Activated CD4-positive, alpha-beta T cell treated with anti-CD3 and anti-CD28 coated beads for 36 hours (primary cell): ENCODE measurements at regions of chr7 and their contacts with region 1.

Region 1: DNA sequence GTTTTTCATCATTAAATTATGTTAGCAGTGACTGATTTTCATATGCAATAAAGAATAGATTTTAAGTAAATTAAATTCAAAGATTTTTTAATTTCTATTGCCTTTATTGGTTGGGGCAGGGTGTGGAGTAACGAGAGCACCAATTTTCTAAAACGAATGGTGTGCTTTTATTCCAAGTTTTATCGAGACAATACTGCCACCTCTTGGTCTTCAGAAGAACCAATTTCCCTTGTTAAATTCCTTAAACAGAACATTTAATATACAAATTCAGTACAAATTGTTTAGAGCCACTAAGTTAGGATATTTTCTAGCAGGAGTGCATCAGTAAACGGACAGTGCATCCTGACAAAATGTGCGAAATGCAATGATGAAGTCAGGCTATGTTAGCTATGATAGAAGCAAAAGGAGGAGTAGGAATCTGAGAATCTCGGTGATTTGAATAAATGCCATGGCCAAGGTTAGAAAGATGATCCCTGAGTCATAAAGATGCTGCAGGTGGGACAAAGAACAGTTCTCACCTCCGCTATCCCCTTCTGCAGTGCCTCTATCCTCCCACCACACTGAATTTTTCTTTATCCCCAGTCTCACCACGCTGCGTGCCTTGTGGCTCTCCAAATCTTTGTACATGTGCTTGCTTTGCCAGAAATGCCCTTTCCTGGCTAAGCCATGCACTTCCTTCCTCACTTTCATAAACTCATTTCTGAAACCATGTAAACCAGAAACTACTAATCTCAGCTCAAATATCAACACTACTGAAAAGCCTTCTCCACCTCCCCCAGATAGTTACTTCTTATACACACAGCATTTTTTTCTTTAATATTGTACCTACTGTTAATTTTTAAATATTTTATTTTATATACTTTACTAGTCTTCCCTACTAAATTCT is 31.9 kb upstream of the AGBL3 start:
- DNase-seq: no peak
- ATAC-seq: no peak
- H3K4me3 Mint-ChIP-seq: no peak overlapping the region
- H3K27ac Mint-ChIP-seq: no peak overlapping the region
- H3K4me1 Mint-ChIP-seq: peaks cover 2% of the 10 kb centered on the region
- H3K27me3 Mint-ChIP-seq: no peaks in the 10 kb centered on the region

Region 2: GRCh38 chr7:134514663-134515062 is 439.8 kb before region 1 on chr7:
- CTCF ChIA-PET with region 1: no interaction called
- POLR2A ChIA-PET with region 1: no interaction called
- intact Hi-C with region 1: loop called in 1 of 2 experiments (anchors 5 kb)
- DNase-seq: peak; percentile 15
- ATAC-seq: peak; percentile 77
- H3K4me3 Mint-ChIP-seq: no peak overlapping the region
- H3K27ac Mint-ChIP-seq: no peak overlapping the region
- H3K4me1 Mint-ChIP-seq: peaks cover 10% of the 10 kb centered on the region
- H3K27me3 Mint-ChIP-seq: peaks cover 5% of the 10 kb centered on the region

Region 3: DNA sequence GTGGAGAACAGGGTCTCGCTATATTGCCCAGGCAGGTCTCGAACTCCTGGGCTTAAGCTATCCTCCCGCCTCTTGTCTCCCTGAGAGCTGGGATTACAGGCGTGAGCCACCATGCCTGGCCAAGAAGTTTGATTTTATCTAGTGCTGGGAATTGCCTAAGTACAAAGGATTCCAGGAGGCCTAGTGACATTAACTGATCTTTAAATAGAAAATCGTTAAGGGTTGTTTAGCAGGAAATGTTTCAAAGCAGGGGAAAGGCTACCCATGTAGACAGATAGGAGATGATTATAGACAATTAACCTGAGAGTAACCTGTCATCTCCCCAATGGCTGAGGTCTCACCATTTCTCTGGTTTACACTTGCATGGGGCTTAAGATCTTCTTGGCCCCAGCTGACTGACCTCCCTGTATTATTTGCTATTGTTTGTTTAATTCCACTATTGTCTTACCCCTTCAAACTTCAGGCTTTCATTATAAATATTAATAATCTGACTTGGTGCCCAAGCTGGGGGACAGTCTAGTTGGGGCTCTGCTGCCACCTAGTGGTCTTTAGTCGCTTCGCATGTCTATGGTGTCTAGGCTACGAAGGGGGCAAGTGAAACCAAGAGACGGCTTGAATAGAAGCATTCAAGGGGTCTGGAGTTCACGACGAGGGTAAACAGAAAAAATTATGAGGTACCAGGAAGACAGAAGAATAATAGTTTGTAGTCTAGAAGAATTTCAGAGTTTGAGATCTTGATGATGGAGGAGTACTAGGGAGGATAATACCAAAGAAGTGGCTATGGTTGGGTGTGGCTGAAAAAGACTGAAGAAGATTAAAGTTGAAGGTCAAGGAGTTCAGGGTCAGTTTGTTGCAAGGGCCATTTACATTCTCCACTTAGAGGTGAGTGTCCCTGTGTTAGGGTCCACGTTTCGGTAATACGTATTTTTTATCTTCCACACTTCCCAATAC is 348.2 kb before region 1 on chr7:
- CTCF ChIA-PET with region 1: interaction called, 11 read pairs
- POLR2A ChIA-PET with region 1: no interaction called
- intact Hi-C with region 1: loop called in 1 of 2 experiments (anchors 1 kb)
- DNase-seq: peak; percentile 78
- ATAC-seq: peak; percentile 93
- H3K4me3 Mint-ChIP-seq: peak overlapping the region; percentile 25
- H3K27ac Mint-ChIP-seq: no peak overlapping the region
- H3K4me1 Mint-ChIP-seq: peaks cover 3% of the 10 kb centered on the region
- H3K27me3 Mint-ChIP-seq: peaks cover 28% of the 10 kb centered on the region

Region 4: DNA sequence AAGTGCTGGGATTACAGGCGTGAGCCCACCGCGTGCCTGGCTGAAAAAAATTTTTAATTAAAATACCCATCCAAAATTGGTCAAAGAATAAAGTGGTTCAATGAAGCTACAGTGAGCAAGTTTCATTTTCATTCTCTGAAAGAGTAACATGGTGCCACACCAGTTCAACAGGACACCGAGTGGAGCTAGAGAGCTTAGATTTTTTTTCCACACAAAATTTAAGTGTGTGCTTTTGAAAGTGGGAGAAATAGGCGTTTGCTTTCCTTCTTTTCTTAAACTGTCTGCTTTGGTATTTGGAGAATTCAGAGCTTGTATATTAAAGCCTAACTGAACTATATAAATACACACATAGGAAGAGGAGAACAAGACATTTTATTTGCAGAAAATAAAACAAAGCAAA is 264.4 kb before region 1 on chr7:
- CTCF ChIA-PET with region 1: interaction called, 4 read pairs
- POLR2A ChIA-PET with region 1: no interaction called
- intact Hi-C with region 1: loop called (anchors 1 to 2 kb)
- DNase-seq: no peak
- ATAC-seq: peak; percentile 37
- H3K4me3 Mint-ChIP-seq: no peak overlapping the region
- H3K27ac Mint-ChIP-seq: peak overlapping the region; percentile 62
- H3K4me1 Mint-ChIP-seq: peaks cover 17% of the 10 kb centered on the region
- H3K27me3 Mint-ChIP-seq: peaks cover 2% of the 10 kb centered on the region

Region 5: GRCh38 chr7:134750083-134751062 is 204.1 kb before region 1 on chr7:
- CTCF ChIA-PET with region 1: interaction called, 3 read pairs
- POLR2A ChIA-PET with region 1: no interaction called
- intact Hi-C with region 1: loop called (anchors 1 to 5 kb)
- DNase-seq: peak; percentile 84
- ATAC-seq: peak; percentile 87
- H3K4me3 Mint-ChIP-seq: no peak overlapping the region
- H3K27ac Mint-ChIP-seq: no peak overlapping the region
- H3K4me1 Mint-ChIP-seq: peaks cover 17% of the 10 kb centered on the region
- H3K27me3 Mint-ChIP-seq: no peaks in the 10 kb centered on the region

Region 6: DNA sequence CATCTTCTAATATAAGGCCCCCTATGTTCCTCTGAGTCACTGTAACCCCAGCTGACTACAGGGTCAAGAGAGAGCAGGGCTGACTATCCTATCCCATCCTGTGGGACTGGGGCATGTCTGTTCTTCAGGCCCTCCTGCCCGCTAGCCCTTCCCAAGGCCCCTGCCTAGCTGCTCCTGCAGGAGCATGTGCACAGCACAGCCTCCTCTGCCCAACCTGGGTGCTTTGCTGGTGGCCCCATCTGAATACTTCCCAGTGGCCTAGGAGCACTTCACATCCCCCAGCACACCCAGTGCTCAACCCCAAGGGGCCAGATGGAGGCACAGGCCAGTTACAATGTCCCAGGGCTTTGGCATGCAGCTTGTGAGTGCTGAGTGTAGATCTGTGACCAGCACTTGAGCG is 69.2 kb after region 1 on chr7:
- CTCF ChIA-PET with region 1: no interaction called
- POLR2A ChIA-PET with region 1: no interaction called
- intact Hi-C with region 1: no loop called
- DNase-seq: no peak
- ATAC-seq: no peak
- H3K4me3 Mint-ChIP-seq: no peak overlapping the region
- H3K27ac Mint-ChIP-seq: no peak overlapping the region
- H3K4me1 Mint-ChIP-seq: no peaks in the 10 kb centered on the region
- H3K27me3 Mint-ChIP-seq: no peaks in the 10 kb centered on the region

Region 7: DNA sequence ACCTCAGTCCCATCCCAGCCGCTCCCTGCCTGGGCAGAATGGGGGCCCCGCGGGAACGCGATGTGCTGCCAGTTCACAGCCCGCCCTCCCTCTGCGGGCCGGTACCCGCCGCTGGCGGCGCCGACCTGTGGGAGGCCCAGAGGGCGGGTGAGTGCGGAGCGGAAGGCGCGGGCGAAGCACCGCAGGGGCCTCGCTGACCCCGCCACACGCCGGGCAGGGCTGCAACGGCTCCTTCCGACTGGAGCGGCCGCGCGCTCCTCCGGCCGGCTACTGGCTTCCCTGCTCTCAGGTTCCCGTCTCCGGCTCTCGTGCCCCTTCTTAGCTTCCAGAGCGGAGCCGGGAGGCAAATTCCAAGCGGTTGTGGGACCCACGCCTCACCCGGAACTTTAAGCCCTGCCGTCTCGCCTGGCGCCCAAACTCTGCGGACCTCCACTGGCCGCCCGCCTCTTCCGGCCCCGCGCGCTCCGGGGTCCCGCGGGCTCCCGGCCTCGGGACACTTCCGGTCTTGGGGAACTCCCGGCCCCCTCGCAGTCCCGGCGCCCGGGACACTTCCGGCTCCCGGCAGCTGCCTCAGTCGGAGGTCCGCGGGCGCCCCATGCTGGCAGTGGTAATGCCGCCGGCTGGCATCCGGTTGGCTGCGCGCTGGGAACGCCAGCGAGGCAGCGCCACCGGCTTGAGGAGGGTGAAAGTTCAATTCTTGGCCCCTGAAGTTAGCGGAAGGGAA is 216.0 kb after region 1 on chr7 and contains the start of gene CYREN:
- CTCF ChIA-PET with region 1: interaction called, 3 read pairs
- POLR2A ChIA-PET with region 1: no interaction called
- intact Hi-C with region 1: loop called in 1 of 2 experiments (anchors 1 kb)
- DNase-seq: peak; percentile 97
- ATAC-seq: peak; percentile 85
- H3K4me3 Mint-ChIP-seq: peak within 1 kb of the TSS; percentile 88
- H3K27ac Mint-ChIP-seq: peak within 1 kb of the TSS; percentile 96
- H3K4me1 Mint-ChIP-seq: peaks cover 50% of the 10 kb centered on the region
- H3K27me3 Mint-ChIP-seq: no peaks in the 10 kb centered on the region
- total RNA-seq, gene CYREN: 32.6 to 40.5 TPM